ENCODE measurements at regions of chr2 and their contacts with region 1.

Region 1: GRCh38 chr2:144026753-144027152 is 493.2 kb downstream of the ZEB2 start:
- DNase-seq: no peak
- ATAC-seq: no peak
- H3K4me3 ChIP-seq: no peak overlapping the region
- H3K27ac ChIP-seq: no peak overlapping the region
- H3K4me1 ChIP-seq: no peaks in the 10 kb centered on the region
- H3K27me3 ChIP-seq: no peaks in the 10 kb centered on the region
- CTCF ChIP-seq: no peak
- EP300 ChIP-seq: no peak
- POLR2A ChIP-seq: no peak
- RAD21 ChIP-seq: no peak

Region 2: DNA sequence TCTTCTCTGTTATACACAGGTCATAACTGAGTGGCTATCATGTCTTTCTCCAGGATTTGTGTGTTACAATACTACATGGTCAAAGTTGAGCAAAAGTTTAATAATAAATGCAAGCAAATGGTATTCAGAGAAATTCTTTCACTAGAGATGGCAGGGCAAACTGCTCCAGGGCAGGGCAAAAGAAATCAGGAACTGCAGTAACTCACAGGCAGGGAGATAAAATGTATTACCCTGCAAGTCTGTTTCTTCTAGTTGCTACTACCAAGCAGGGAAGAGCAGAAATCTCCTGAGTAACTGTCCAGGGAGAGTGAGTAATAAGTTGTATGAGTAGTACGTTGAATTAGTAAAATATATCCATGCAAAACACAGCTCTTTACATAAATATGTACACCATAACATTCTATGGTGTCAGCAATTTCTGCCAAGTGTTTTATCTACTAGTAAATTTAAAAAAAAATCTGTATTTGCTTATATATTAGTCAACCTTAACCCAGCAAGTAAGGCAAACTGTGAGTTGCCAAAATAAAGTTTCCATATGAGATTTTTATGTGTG is 89.1 kb after region 1 on chr2:
- CTCF ChIA-PET with region 1: no interaction called
- POLR2A ChIA-PET with region 1: no interaction called
- RAD21 ChIA-PET with region 1: no interaction called
- SMC1A ChIA-PET with region 1: no interaction called
- in situ Hi-C with region 1: no loop called
- intact Hi-C with region 1: no loop called
- DNase-seq: no peak
- ATAC-seq: no peak
- H3K4me3 ChIP-seq: no peak overlapping the region
- H3K27ac ChIP-seq: no peak overlapping the region
- H3K4me1 ChIP-seq: no peaks in the 10 kb centered on the region
- H3K27me3 ChIP-seq: no peaks in the 10 kb centered on the region
- CTCF ChIP-seq: no peak
- EP300 ChIP-seq: no peak
- POLR2A ChIP-seq: no peak
- RAD21 ChIP-seq: no peak

Region 3: DNA sequence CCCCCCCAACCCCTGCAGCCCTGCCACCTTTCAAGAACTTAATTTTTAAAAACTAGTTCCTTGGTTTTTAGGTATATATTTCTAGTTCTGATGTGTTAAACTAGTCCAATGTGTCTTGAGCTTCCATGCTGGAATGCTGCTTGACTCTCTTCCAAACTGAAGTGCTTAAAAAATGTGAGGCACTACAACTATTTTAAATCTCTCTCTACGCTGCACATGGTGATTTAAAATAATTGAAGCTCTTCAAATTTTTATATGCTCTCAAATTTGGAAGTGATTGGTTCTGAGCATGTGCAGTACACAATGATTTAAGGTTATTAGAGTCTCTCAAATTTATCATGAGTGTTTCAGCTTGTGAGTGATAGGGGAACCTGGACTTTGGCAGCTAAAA is 685.8 kb after region 1 on chr2:
- CTCF ChIA-PET with region 1: no interaction called
- POLR2A ChIA-PET with region 1: interaction called, 10 read pairs
- RAD21 ChIA-PET with region 1: no interaction called
- SMC1A ChIA-PET with region 1: no interaction called
- in situ Hi-C with region 1: no loop called
- intact Hi-C with region 1: no loop called
- DNase-seq: no peak
- ATAC-seq: no peak
- H3K4me3 ChIP-seq: no peak overlapping the region
- H3K27ac ChIP-seq: no peak overlapping the region
- H3K4me1 ChIP-seq: no peaks in the 10 kb centered on the region
- H3K27me3 ChIP-seq: no peaks in the 10 kb centered on the region
- CTCF ChIP-seq: no peak
- EP300 ChIP-seq: no peak
- POLR2A ChIP-seq: no peak
- RAD21 ChIP-seq: no peak

Measured in GM12878 (cell line).